ENCODE measurements at regions of chr10 and their contacts with region 1.

Region 1: DNA sequence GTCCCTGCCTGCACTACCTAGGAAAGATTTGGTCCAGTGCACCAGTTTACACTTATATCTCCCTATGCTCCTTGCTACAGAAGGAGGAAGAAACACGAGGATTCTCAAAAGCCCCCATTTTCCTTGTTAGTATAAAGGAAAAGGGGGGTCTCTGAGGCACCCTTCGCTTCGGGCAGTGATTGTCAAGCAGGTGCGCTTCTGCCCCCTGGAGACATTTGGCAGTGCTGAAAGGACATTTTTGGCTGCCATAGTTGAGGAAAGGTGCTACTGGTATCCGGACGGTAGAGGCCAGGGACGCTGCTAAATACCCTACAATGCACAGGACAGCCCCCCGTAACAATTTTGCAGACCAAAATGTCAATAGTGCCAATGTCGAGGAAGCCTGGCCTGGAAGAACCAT is 193.7 kb downstream of the GFRA1 start:
- DNase-seq: no peak
- ATAC-seq: no peak
- H3K4me3 ChIP-seq: no peak overlapping the region
- H3K27ac ChIP-seq: no peak overlapping the region
- H3K4me1 ChIP-seq: no peaks in the 10 kb centered on the region
- H3K27me3 ChIP-seq: no peaks in the 10 kb centered on the region

Region 2: GRCh38 chr10:116115036-116115641 is 35.8 kb after region 1 on chr10:
- intact Hi-C with region 1: loop called in 1 of 2 experiments (anchors 5 kb)
- DNase-seq: no peak
- ATAC-seq: no peak
- H3K4me3 ChIP-seq: no peak overlapping the region
- H3K27ac ChIP-seq: no peak overlapping the region
- H3K4me1 ChIP-seq: no peaks in the 10 kb centered on the region
- H3K27me3 ChIP-seq: no peaks in the 10 kb centered on the region

Measured in aorta (tissue), 5 donors.